ENCODE measurements at regions of chr3 and their contacts with region 1.

Region 1: GRCh38 chr3:45224824-45225464 is 1.1 kb downstream of the TMEM158 start:
- DNase-seq: peak; percentile 89
- H3K4me3 ChIP-seq: peak overlapping the region; percentile 38 to 56
- H3K27ac ChIP-seq: no peak overlapping the region
- H3K4me1 ChIP-seq: peaks cover 3% of the 10 kb centered on the region
- H3K27me3 ChIP-seq: no peaks in the 10 kb centered on the region
- CTCF ChIP-seq: peak; percentile 26 to 39 (median 29)
- POLR2A ChIP-seq: no peak

Region 2: DNA sequence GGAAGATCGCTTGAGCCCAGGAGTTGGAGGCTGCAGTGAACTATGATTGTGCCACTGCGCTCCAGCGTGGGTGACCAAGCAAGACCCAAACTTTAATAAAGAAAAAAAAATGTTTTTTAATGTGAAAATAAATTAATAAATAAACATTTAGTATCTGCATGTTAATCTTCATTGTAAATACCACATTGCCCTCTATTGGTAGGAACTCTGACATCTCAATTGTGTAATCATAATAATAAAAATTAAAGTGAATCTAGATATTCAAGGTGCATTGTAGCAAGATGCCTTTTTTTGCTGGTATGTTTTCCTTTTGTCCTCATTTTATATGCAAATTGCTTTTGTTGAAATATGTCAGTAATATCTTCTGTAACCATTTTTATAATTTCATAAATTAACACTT is 274.6 kb after region 1 on chr3:
- intact Hi-C with region 1: loop called (anchors 10 kb)
- DNase-seq: no peak
- H3K4me3 ChIP-seq: no peak overlapping the region
- H3K27ac ChIP-seq: no peak overlapping the region
- H3K4me1 ChIP-seq: no peaks in the 10 kb centered on the region
- H3K27me3 ChIP-seq: no peaks in the 10 kb centered on the region
- CTCF ChIP-seq: peak; percentile 11 to 57 (median 13)
- POLR2A ChIP-seq: no peak

Measured in testis (tissue), 5 donors.